ENCODE measurements at regions of chr6 and their contacts with region 1.

Region 1: DNA sequence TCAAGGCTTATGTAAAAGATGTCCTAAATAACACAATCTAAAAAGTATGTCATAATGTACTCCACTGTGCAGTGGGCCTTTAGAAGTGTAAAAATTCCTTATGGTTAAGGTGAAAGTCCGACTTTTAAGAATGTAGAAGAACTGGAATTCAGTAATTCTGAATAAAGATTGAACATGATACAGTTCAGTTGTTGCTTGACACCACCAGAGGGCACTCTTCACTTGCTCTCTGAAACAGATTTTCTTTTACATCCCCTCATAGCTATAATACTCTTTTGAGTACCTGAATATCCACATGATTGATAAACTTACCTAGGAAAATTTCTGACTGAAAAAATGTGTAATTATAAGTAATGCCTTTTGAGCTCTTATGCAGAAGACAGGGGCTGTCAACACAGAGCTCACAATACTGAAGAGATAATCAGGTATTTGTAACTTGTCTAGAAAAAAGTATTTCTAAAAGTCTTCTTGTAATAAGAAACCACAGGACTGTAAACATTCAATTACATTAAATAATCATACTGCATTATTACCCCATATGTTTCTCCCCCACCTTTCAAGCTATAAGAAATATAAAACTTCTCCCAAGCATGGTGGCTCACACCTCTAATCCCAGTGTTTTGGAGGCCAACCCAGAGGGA is 92.1 kb downstream of the POPDC3 start:
- DNase-seq: peak; percentile 63
- ATAC-seq: peak; percentile 50
- H3K4me3 ChIP-seq: no peak overlapping the region
- H3K27ac ChIP-seq: no peak overlapping the region
- H3K4me1 ChIP-seq: 0 out of 2 replicates have a peak, but pooled peaks cover 3% of the 10 kb centered on the region
- H3K27me3 ChIP-seq: no peaks in the 10 kb centered on the region
- CTCF ChIP-seq: peak; percentile 80

Region 2: GRCh38 chr6:104828478-104828877 is 259.2 kb before region 1 on chr6:
- CTCF ChIA-PET with region 1: no interaction called
- POLR2A ChIA-PET with region 1: no interaction called
- intact Hi-C with region 1: no loop called
- DNase-seq: no peak
- ATAC-seq: no peak
- H3K4me3 ChIP-seq: no peak overlapping the region
- H3K27ac ChIP-seq: peak overlapping the region; percentile 16; the same call in 1 of the 2 replicates
- H3K4me1 ChIP-seq: peaks cover 13% of the 10 kb centered on the region; the same call in 1 of the 2 replicates
- H3K27me3 ChIP-seq: no peaks in the 10 kb centered on the region
- CTCF ChIP-seq: no peak

Region 3: GRCh38 chr6:105179244-105180065 is 91.8 kb after region 1 on chr6 and contains the start of gene POPDC3:
- CTCF ChIA-PET with region 1: no interaction called
- POLR2A ChIA-PET with region 1: no interaction called
- intact Hi-C with region 1: loop called (anchors 5 kb)
- DNase-seq: peak; percentile 52
- ATAC-seq: peak; percentile 59
- H3K4me3 ChIP-seq: peak within 1 kb of the TSS; percentile 89
- H3K27ac ChIP-seq: peak within 1 kb of the TSS; percentile 92
- H3K4me1 ChIP-seq: peaks cover 21% of the 10 kb centered on the region
- H3K27me3 ChIP-seq: no peaks in the 10 kb centered on the region
- CTCF ChIP-seq: no peak
- total RNA-seq, gene POPDC3: 31.6 and 41.4 TPM in 2 replicates

Region 4: GRCh38 chr6:105301072-105301503 is 213.4 kb after region 1 on chr6:
- CTCF ChIA-PET with region 1: no interaction called
- POLR2A ChIA-PET with region 1: no interaction called
- intact Hi-C with region 1: loop called (anchors 2 kb)
- DNase-seq: no peak
- ATAC-seq: no peak
- H3K4me3 ChIP-seq: no peak overlapping the region
- H3K27ac ChIP-seq: no peak overlapping the region
- H3K4me1 ChIP-seq: peaks cover 10% of the 10 kb centered on the region; the same call in 1 of the 2 replicates
- H3K27me3 ChIP-seq: no peaks in the 10 kb centered on the region
- CTCF ChIP-seq: no peak

Region 5: DNA sequence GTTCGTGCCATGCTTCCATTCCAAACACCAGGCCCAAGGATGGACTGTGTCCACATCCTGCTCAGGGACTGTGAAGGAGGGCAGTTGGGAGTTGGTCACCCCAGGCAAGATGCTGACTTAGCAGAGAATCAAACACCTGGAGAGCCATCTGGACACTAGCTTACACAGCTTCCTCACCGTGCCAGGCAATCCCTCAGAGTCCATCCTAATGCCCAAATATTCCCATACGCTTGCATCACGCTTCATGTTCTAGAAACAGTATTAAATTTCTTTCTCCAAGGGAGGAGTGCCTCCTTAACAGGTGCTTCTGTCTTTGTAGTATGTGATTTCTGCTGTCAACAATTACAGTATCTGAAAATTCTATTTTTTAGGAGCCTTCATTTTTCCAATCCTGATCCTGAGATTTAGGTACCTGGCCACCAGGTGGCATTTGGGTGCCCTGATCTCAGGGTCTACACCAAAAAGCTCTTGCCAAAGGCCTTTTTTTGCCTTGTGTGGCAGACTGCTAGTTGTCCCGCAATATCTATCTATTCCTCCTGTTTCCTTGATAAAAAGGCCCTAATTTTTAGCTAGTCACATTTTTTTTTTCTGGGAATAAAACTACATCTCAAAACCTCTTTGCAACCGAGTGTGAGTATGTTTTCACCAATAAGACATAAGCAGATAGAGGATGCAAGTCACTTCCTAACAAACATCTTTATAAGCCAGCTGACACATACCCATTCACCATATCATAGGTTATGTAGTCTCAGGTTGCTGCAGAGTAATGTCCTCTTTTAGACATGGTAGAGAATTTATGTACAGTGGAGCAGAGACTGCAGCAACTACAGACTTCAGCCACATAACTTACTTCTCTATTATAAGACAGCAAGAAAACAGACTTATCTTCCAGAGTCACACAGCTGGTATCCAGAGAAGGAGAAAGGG is 230.2 kb after region 1 on chr6:
- CTCF ChIA-PET with region 1: no interaction called
- POLR2A ChIA-PET with region 1: no interaction called
- intact Hi-C with region 1: loop called (anchors 1 kb)
- DNase-seq: peak; percentile 61
- ATAC-seq: peak; percentile 72
- H3K4me3 ChIP-seq: peak overlapping the region; percentile 30; the same call in 1 of the 2 replicates
- H3K27ac ChIP-seq: peak overlapping the region; percentile 90
- H3K4me1 ChIP-seq: peaks cover 33% of the 10 kb centered on the region
- H3K27me3 ChIP-seq: no peaks in the 10 kb centered on the region
- CTCF ChIP-seq: peak; percentile 74

Region 6: DNA sequence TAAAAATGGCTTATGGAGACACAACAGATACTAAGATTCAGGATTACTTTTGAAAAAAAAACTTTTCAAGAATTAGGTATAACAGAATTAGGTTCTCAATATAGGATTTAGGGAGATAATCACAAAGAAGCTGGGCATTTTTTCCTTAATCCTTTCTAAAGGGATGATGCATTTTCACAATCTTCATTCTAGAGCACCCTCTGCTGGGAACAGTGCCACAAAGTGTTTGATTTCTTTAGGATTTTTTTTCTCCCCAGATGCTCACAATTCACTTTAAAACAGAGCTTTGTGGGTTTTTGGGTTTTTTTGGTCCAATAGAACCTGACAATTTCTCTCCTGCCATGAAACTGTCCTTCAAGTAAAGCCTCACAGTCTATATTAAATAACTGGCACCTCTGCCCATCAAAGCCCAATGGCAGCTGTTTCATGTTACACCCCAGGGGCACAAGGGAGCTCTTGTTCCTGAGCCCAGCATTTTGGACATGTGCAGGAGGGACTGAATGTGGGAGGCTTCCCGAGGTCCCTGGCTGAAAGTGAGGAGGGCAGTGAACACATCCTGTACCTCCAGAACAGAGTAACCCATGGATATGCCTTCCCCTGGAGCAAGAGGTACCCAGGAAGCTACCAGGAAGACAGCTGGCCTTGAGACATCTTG is 275.5 kb after region 1 on chr6:
- CTCF ChIA-PET with region 1: no interaction called
- POLR2A ChIA-PET with region 1: no interaction called
- intact Hi-C with region 1: loop called (anchors 1 kb)
- DNase-seq: peak; percentile 52
- ATAC-seq: no peak
- H3K4me3 ChIP-seq: no peak overlapping the region
- H3K27ac ChIP-seq: no peak overlapping the region
- H3K4me1 ChIP-seq: peaks cover 17% of the 10 kb centered on the region
- H3K27me3 ChIP-seq: no peaks in the 10 kb centered on the region
- CTCF ChIP-seq: peak; percentile 62

Region 7: GRCh38 chr6:105402939-105403935 is 315.5 kb after region 1 on chr6 and contains the start of gene PREP:
- CTCF ChIA-PET with region 1: no interaction called
- POLR2A ChIA-PET with region 1: no interaction called
- intact Hi-C with region 1: loop called (anchors 1 kb)
- DNase-seq: peak; percentile 76
- ATAC-seq: peak; percentile 92
- H3K4me3 ChIP-seq: peak within 1 kb of the TSS; percentile 94
- H3K27ac ChIP-seq: peak within 1 kb of the TSS; percentile 64
- H3K4me1 ChIP-seq: peaks cover 20% of the 10 kb centered on the region
- H3K27me3 ChIP-seq: no peaks in the 10 kb centered on the region
- CTCF ChIP-seq: peak; percentile 79
- total RNA-seq, gene PREP: 16.9 and 18.5 TPM in 2 replicates

Region 8: DNA sequence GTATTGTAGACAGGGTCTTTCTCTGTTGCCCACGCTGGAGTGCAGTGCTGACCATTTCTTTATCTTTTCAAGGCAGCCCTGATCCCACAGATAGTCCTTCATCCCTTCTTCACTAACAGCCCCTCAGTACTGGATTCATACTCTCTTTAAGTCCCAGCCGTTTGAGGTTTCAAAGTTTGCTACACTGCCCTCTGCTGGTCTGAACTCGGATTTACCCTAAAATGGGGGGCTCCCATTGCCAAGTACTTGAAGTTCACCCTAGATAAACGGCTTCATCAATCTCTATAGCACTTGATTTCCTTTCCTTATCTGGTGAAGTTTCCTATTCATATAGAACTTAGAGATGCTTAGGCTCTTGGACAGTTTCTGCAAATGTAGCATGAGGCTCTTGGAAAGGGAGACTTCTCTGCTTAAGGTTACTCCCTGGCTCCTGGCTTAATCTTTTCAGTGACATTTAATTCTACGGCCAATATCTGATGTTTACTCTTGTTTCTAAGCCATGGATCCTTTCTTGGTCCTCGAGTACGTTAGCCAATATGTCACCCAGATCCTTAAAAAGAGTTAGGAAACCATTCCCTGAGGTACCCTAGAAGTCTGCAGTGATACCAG is 336.6 kb after region 1 on chr6:
- CTCF ChIA-PET with region 1: no interaction called
- POLR2A ChIA-PET with region 1: no interaction called
- intact Hi-C with region 1: loop called (anchors 2 kb)
- DNase-seq: peak; percentile 70
- ATAC-seq: peak; percentile 61; the same call in 1 of the 2 replicates
- H3K4me3 ChIP-seq: no peak overlapping the region
- H3K27ac ChIP-seq: no peak overlapping the region
- H3K4me1 ChIP-seq: peaks cover 21% of the 10 kb centered on the region
- H3K27me3 ChIP-seq: no peaks in the 10 kb centered on the region
- CTCF ChIP-seq: peak; percentile 77